ENCODE measurements at regions of chr12 and their contacts with region 1.

Region 1: DNA sequence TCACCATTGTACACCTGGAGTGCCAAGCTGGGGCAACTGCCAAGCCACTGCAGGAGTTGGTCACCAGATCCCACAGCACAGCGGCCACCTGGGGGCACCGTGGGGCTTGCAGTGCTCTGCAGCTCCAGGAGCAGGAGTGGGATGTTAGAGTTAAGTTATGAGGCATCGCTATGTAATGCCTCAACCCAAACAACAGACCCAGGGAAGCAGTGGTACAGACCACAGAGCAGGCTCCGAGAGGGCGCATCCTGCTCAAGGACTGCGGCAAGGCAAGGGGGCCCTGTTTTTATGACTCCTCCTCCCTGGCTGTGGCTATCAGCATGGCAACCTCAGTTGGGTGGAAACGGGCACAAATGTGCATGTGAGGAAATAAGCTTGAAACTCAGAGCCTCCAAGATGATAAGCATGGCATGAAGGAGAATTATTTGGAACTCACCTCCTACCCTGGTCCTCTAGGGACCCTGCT is 63.1 kb downstream of the ARL6IP4 start:
- DNase-seq: peak; percentile 99
- ATAC-seq: peak; percentile 92
- H3K4me3 ChIP-seq: no peak overlapping the region
- H3K27ac ChIP-seq: peak overlapping the region; percentile 93
- H3K4me1 ChIP-seq: peaks cover 33% of the 10 kb centered on the region
- H3K27me3 ChIP-seq: no peaks in the 10 kb centered on the region
- CTCF ChIP-seq: peak; percentile 93
- POLR2A ChIP-seq: no peak; the same call in 1 of the 2 replicates
- RAD21 ChIP-seq: peak; percentile 97

Region 2: GRCh38 chr12:122980183-122981046 is 63.2 kb before region 1 on chr12 and contains the start of gene ARL6IP4:
- CTCF ChIA-PET with region 1: no interaction called
- POLR2A ChIA-PET with region 1: no interaction called
- dilution Hi-C with region 1: no loop called
- in situ Hi-C with region 1: no loop called
- intact Hi-C with region 1: loop called (anchors 2 kb)
- DNase-seq: peak; percentile 54
- ATAC-seq: peak; percentile 69
- H3K4me3 ChIP-seq: peak within 1 kb of the TSS; percentile 85
- H3K27ac ChIP-seq: peak within 1 kb of the TSS; percentile 89
- H3K4me1 ChIP-seq: peaks cover 32% of the 10 kb centered on the region
- H3K27me3 ChIP-seq: no peaks in the 10 kb centered on the region
- CTCF ChIP-seq: no peak
- POLR2A ChIP-seq: peak; percentile 54; the same call in 1 of the 2 replicates
- RAD21 ChIP-seq: no peak; the same call in 1 of the 2 replicates
- total RNA-seq, gene ARL6IP4: 161 and 205 TPM in 2 replicates

Region 3: GRCh38 chr12:123126186-123127006 is 82.8 kb after region 1 on chr12:
- CTCF ChIA-PET with region 1: interaction called, 3 read pairs
- POLR2A ChIA-PET with region 1: no interaction called
- dilution Hi-C with region 1: no loop called
- in situ Hi-C with region 1: no loop called
- intact Hi-C with region 1: loop called (anchors 2 kb)
- DNase-seq: peak; percentile 98
- ATAC-seq: peak; percentile 85
- H3K4me3 ChIP-seq: no peak overlapping the region
- H3K27ac ChIP-seq: peak overlapping the region; percentile 93
- H3K4me1 ChIP-seq: peaks cover 14% of the 10 kb centered on the region
- H3K27me3 ChIP-seq: no peaks in the 10 kb centered on the region
- CTCF ChIP-seq: peak; percentile 38; the same call in 1 of the 2 replicates
- POLR2A ChIP-seq: no peak
- RAD21 ChIP-seq: peak; percentile 35

Region 4: DNA sequence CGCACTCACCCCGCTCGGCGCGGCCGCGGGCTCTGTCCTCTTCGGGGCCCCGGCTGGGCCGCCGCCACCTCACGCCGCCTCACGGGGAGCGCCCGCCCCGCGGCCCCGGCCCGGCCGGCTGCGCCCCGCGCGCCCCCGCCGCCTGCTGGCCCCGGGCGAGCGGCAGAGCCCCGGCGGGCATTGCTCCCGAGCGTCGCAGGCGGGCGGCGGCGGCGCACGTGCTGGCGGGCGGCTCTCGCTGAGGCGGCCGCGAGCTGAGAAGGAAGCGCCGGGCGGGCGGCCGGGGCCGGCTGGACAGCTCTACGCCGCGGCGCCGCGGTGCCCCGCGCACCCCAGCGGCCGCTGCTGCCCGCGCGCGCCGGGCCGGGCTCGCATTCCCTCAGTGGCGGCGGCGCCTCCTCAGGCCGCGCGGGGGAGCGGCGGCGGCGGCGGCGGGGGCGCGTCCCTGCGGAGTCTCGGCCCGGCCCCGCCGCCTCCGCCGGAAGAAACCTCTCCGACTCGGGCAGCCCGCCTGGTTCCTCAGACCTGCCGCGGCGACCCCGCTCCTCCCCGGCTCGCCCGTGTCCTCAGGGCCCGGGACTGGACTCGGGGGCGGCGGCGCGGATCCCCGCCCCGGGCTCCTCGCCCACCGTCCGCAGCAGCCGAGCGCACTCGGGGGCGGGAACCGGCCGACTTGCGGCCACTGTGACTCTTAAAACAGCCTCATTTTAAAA is 107.3 kb after region 1 on chr12 and contains the start of gene PITPNM2:
- CTCF ChIA-PET with region 1: interaction called, 9 read pairs
- POLR2A ChIA-PET with region 1: interaction called, 3 read pairs
- dilution Hi-C with region 1: no loop called
- in situ Hi-C with region 1: no loop called
- intact Hi-C with region 1: loop called (anchors 1 kb)
- DNase-seq: peak; percentile 58
- ATAC-seq: peak; percentile 94
- H3K4me3 ChIP-seq: peak within 1 kb of the TSS; percentile 53
- H3K27ac ChIP-seq: peak within 1 kb of the TSS; percentile 68
- H3K4me1 ChIP-seq: peaks cover 15% of the 10 kb centered on the region
- H3K27me3 ChIP-seq: no peaks in the 10 kb centered on the region
- CTCF ChIP-seq: peak; percentile 41
- POLR2A ChIP-seq: no peak
- RAD21 ChIP-seq: peak; percentile 49
- total RNA-seq, gene PITPNM2: 0.83 and 1.6 TPM in 2 replicates